ENCODE measurements at regions of chr11 and their contacts with region 1.

Region 1: GRCh38 chr11:118265954-118266353 is 1.9 kb upstream of the MPZL2 start:
- DNase-seq: no peak
- H3K4me3 ChIP-seq: no peak overlapping the region
- H3K27ac ChIP-seq: no peak overlapping the region
- H3K4me1 ChIP-seq: no peaks in the 10 kb centered on the region
- H3K27me3 ChIP-seq: no peaks in the 10 kb centered on the region
- CTCF ChIP-seq: no peak
- EP300 ChIP-seq: no peak
- POLR2A ChIP-seq: no peak

Region 2: DNA sequence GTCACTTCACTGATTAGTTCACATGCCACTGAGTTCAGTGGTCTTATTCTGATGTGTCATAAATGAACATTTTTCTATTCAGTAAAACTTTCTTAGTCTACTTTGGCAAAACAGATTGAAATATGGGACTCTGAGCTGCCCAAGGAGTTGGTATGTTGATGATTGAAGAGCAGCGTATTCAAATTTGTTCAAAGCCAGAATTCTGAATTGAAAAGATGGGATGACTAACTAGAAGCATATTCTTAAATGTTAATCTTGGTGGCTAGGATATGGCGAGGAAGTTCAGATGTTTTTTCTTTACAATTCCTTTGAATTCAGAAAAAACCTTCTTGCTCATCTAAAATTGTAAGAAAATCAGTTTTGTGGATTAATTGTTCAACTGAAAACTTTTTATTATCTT is 205.1 kb after region 1 on chr11:
- intact Hi-C with region 1: loop called in 1 of 4 experiments (anchors 5 kb)
- DNase-seq: no peak
- H3K4me3 ChIP-seq: no peak overlapping the region
- H3K27ac ChIP-seq: no peak overlapping the region
- H3K4me1 ChIP-seq: peaks cover 2% of the 10 kb centered on the region
- H3K27me3 ChIP-seq: no peaks in the 10 kb centered on the region
- CTCF ChIP-seq: no peak
- EP300 ChIP-seq: no peak
- POLR2A ChIP-seq: no peak

Region 3: GRCh38 chr11:118514103-118514502 is 248.1 kb after region 1 on chr11:
- intact Hi-C with region 1: no loop called
- DNase-seq: no peak
- H3K4me3 ChIP-seq: no peak overlapping the region
- H3K27ac ChIP-seq: no peak overlapping the region
- H3K4me1 ChIP-seq: no peaks in the 10 kb centered on the region
- H3K27me3 ChIP-seq: no peaks in the 10 kb centered on the region
- CTCF ChIP-seq: no peak
- EP300 ChIP-seq: no peak
- POLR2A ChIP-seq: no peak

Measured in ovary (tissue), 10 donors.